ENCODE measurements at regions of chr6 and their contacts with region 1.

Region 1: DNA sequence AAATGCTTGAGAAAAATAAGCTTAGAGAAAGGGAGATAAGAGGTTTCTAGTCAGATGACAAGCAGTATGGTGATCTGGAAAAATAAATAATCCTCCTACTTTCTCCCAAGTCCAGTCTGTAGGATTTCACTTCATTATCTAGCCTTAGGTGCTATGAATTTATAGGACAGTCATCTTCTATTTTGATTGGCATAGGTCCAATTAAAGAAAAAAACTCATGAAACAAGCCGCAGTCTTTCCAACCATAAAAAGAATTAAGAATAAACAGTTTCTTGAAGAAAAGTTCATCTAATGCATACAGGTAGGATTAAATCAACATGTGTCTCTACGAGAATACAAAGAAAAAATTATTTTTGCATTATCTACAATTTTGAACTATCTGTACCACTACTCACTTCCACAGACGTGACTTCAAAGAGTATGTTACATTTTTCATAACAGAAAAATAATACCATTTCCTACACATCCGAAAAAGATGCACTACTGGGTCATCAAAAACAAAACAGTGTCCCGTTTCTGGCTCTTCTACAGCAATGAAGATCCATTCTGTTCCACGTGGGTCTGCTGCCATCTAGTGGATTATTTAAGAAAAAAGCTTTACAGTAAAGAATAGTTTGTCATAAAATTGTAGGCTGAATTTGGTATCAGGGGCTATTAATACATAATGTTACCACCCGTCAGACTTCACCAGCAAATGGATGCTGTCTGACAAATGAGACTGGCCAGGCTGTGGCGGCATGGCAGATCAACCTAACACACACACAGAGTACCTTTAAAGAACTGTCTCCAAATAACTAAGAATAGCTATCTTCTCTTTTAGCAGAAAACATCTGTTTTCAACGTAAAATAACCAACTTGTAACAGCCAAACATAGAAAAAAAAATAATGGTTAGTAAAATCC is 28.9 kb downstream of the STX7 start:
- DNase-seq: peak; percentile 30
- H3K4me3 ChIP-seq: no peak overlapping the region
- H3K27ac ChIP-seq: no peak overlapping the region
- H3K4me1 ChIP-seq: no peaks in the 10 kb centered on the region
- H3K27me3 ChIP-seq: no peaks in the 10 kb centered on the region
- CTCF ChIP-seq: peak; percentile 69 to 76 (median 75)
- POLR2A ChIP-seq: no peak

Region 2: GRCh38 chr6:132279592-132280139 is 204.4 kb before region 1 on chr6:
- intact Hi-C with region 1: loop called (anchors 5 kb)
- DNase-seq: peak; percentile 81
- H3K4me3 ChIP-seq: peak overlapping the region in 1 of 2 donors; percentile 4
- H3K27ac ChIP-seq: no peak overlapping the region
- H3K4me1 ChIP-seq: no peaks in the 10 kb centered on the region
- H3K27me3 ChIP-seq: no peaks in the 10 kb centered on the region
- CTCF ChIP-seq: peak; percentile 76 to 90 (median 88)
- POLR2A ChIP-seq: no peak

Region 3: GRCh38 chr6:132832891-132833290 is 348.9 kb after region 1 on chr6:
- intact Hi-C with region 1: no loop called
- DNase-seq: no peak
- H3K4me3 ChIP-seq: no peak overlapping the region
- H3K27ac ChIP-seq: no peak overlapping the region
- H3K4me1 ChIP-seq: no peaks in the 10 kb centered on the region
- H3K27me3 ChIP-seq: no peaks in the 10 kb centered on the region
- CTCF ChIP-seq: no peak
- POLR2A ChIP-seq: no peak

Region 4: DNA sequence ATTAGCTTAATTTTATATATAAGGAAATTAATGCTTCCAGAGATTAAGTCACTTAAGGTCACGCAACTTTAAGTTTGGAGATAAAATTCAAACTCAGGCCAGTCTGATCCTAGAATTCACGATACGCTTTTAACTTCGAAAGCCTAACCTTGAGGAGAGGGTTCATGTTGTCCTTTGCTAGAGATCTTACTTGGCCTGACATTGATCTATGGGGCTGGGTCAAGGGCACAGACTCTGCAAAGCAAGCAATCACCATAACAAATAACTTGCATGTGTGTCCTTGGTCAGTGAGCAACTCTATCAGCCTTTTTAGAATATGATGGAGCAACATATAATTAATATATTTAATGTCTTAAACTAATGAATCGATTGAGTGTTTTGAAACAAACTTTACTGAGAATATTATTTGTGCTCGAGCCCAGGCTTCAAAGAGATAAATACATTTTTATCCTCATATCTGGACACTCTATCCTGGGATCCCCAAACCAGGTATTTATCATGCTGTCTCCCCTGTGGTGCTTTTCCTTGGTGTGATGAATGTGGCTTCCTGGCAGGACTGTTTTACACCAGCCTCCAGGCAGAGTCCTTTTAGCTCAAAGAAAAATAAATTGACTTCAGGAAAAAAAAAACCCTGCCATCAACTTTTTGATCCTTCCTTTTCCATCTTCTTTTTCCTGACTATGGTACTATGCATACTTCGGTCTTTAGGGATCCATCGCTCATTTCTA is 359.5 kb after region 1 on chr6:
- intact Hi-C with region 1: no loop called
- DNase-seq: no peak
- H3K4me3 ChIP-seq: no peak overlapping the region
- H3K27ac ChIP-seq: no peak overlapping the region
- H3K4me1 ChIP-seq: no peaks in the 10 kb centered on the region
- H3K27me3 ChIP-seq: no peaks in the 10 kb centered on the region
- CTCF ChIP-seq: no peak
- POLR2A ChIP-seq: no peak

Measured in testis (tissue), 5 donors.